Activated CD4-positive, alpha-beta memory T cell treated with anti-CD3 and anti-CD28 coated beads for 36 hours (primary cell): ENCODE measurements at regions of chr11 and their contacts with region 1.

Region 1: DNA sequence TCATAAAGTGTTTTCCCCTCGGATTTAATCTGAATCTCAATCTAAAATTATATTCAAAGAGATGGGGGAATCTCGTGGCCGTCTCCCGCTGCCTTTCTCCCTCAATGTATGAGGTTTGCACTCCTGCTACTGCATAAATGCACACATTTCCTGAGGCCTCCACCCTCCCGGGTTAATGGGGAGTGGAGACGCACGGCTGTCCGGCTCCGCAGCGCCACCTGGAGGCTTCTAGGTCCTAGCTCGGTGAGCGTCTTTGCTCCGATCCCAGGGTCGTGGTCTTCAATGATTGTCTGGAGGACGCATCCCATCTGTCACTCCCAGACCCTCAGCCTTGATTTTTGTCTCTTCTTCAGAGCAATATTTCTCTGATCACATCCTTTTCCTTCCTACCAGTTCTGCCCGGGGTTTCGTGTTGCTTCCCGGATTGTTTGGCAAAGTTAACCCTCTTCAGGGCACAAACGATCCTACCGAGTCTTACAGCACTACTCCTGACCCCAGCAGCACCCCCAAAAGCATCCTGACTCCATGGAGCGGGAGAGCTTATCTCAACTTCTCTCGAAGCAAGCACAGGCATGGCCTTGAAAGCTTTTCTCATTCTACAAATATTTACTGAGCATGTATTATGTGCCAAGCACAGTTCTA is at the start of gene LMO1:
- DNase-seq: peak; percentile 83
- H3K4me3 Mint-ChIP-seq: peak within 1 kb of the TSS; percentile 41
- H3K27ac Mint-ChIP-seq: no peak within 1 kb of the TSS
- H3K4me1 Mint-ChIP-seq: peaks cover 11% of the 10 kb centered on the region
- H3K27me3 Mint-ChIP-seq: peaks cover 63% of the 10 kb centered on the region
- total RNA-seq, gene LMO1: not detected

Region 2: GRCh38 chr11:8149726-8150125 is 114.2 kb before region 1 on chr11:
- CTCF ChIA-PET with region 1: no interaction called
- POLR2A ChIA-PET with region 1: no interaction called
- intact Hi-C with region 1: no loop called
- DNase-seq: no peak
- H3K4me3 Mint-ChIP-seq: no peak overlapping the region
- H3K27ac Mint-ChIP-seq: no peak overlapping the region
- H3K4me1 Mint-ChIP-seq: no peaks in the 10 kb centered on the region
- H3K27me3 Mint-ChIP-seq: no peaks in the 10 kb centered on the region

Region 3: DNA sequence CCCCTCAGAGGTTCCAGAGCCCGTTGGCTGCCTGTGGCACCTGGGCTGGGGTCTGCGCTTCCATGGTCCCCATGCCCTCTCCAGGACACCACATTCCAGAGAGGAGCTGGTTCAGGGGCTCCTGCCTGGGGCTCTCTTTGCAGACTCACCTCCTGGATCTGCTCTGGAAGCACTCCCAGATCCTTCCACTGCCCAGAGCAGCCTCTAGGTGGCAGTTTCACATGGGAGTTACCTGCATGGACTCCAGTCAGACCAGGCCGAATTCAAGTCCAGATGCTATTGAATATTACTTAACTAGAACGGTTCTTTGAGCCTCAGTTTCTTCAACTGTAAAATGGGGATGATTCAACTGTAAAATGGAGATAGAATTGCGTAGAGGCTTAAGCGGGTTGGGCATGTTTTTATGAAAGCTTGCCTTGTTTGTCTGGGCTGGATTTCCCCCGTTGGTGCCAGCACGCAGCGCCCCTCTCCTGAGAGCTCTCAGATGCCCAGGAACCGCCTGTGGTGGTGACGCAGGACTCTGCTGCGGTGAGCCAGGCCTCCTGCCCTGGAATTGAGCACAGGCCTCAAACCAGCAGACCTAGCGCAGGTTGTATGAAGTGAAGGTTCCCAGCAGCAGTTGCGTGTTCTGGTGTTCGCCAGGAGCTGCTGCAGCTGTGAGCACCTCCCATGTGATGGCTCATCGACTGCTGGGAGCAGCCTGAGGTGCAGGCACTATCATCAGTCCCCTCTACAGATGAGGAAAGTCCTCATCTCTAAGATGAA is 44.5 kb before region 1 on chr11:
- CTCF ChIA-PET with region 1: interaction called, 18 read pairs
- POLR2A ChIA-PET with region 1: no interaction called
- intact Hi-C with region 1: no loop called
- DNase-seq: peak; percentile 33
- H3K4me3 Mint-ChIP-seq: no peak overlapping the region
- H3K27ac Mint-ChIP-seq: no peak overlapping the region
- H3K4me1 Mint-ChIP-seq: no peaks in the 10 kb centered on the region
- H3K27me3 Mint-ChIP-seq: no peaks in the 10 kb centered on the region

Region 4: DNA sequence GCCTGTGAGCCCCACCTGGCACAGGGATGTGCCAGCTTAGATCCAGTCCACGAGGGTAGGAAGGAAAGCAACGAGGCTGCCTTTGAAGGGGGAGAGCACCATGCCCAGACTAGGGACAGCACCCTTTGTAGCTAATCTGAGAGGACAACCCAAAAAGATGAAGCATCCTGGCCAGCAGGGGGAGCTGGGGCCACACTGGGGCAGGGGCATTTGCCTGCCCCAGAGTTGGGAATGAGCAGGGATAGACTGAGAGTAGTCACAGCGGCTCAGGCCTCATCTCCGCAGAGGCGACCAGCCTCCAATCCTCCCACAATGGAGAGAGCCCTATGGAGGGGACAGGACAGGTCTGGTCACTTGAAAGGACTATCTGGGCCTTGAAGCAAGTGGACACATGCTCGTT is 16.6 kb before region 1 on chr11:
- CTCF ChIA-PET with region 1: interaction called, 47 read pairs
- POLR2A ChIA-PET with region 1: no interaction called
- intact Hi-C with region 1: loop called (anchors 2 kb)
- DNase-seq: peak; percentile 35
- H3K4me3 Mint-ChIP-seq: no peak overlapping the region
- H3K27ac Mint-ChIP-seq: no peak overlapping the region
- H3K4me1 Mint-ChIP-seq: no peaks in the 10 kb centered on the region
- H3K27me3 Mint-ChIP-seq: peaks cover 6% of the 10 kb centered on the region

Region 5: GRCh38 chr11:8277691-8278090 is 13.8 kb after region 1 on chr11:
- CTCF ChIA-PET with region 1: interaction called, 19 read pairs
- POLR2A ChIA-PET with region 1: no interaction called
- intact Hi-C with region 1: no loop called
- DNase-seq: no peak
- H3K4me3 Mint-ChIP-seq: no peak overlapping the region
- H3K27ac Mint-ChIP-seq: no peak overlapping the region
- H3K4me1 Mint-ChIP-seq: no peaks in the 10 kb centered on the region
- H3K27me3 Mint-ChIP-seq: peaks cover 6% of the 10 kb centered on the region